ENCODE measurements at regions of chr5 and their contacts with region 1.

Region 1: DNA sequence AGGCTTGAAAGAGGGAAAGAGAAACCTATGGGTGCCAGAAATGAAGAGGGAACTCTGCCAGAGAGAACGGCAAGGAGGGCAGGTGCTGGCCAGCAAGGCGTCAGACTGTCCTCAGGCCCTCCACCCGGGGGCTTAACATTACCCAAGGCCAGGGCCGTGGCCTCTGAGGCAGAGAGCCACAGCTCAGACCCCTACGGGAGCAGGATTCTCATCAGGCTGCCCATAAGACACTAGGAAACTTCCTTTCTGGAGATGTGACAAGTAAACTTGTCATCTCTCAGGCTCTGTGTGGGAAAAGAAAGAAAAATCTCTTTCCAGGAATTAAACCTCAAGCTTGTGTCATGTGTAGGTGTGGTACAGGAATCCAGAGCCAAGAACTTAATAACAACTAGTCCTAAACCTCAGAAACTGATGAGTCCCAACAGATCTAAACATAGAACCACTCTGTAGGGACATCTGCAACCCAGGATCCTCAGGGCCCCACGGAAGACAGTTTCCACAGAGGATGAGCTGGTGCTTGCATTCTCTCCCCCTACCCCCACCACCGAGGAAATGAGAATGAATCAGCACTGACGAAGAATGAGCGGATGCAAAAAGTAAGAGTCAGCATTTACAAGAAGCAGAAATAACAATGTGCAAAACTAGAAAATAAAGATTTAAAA is 74.3 kb downstream of the DCP2 start:
- DNase-seq: peak; percentile 69
- H3K4me3 Mint-ChIP-seq: peak overlapping the region; percentile 7
- H3K27ac Mint-ChIP-seq: peak overlapping the region; percentile 89
- H3K4me1 Mint-ChIP-seq: peaks cover 45% of the 10 kb centered on the region
- H3K27me3 Mint-ChIP-seq: no peaks in the 10 kb centered on the region

Region 2: DNA sequence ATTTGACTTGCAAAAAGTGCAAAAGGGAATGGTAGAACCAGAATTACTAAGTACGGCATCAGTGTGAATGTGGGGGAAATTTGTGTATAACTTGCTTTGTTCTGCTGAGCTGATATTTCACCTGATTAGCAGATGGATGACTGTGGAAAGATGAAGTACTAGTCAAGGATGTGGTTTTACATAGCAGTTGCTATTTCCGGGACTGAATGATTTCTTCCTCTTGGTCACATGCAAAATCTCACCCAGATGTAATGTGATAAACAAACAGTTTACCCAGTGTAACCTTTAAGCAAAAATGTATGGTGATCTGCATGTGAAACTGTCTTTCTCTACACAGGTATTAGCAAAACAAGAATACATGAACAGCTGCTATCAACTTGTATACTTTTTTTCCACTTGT is 28.2 kb before region 1 on chr5:
- CTCF ChIA-PET with region 1: interaction called, 3 read pairs
- POLR2A ChIA-PET with region 1: interaction called, 28 read pairs
- DNase-seq: no peak
- H3K4me3 Mint-ChIP-seq: peak overlapping the region; percentile 40
- H3K27ac Mint-ChIP-seq: peak overlapping the region; percentile 86
- H3K4me1 Mint-ChIP-seq: peaks cover 68% of the 10 kb centered on the region
- H3K27me3 Mint-ChIP-seq: no peaks in the 10 kb centered on the region

Region 3: GRCh38 chr5:113061846-113062780 is 11.3 kb after region 1 on chr5:
- CTCF ChIA-PET with region 1: interaction called, 3 read pairs
- POLR2A ChIA-PET with region 1: interaction called, 11 read pairs
- DNase-seq: no peak
- H3K4me3 Mint-ChIP-seq: peak overlapping the region; percentile 1
- H3K27ac Mint-ChIP-seq: peak overlapping the region; percentile 67
- H3K4me1 Mint-ChIP-seq: peaks cover 35% of the 10 kb centered on the region
- H3K27me3 Mint-ChIP-seq: no peaks in the 10 kb centered on the region